Right lobe of liver (tissue), 6 donors: ENCODE measurements at regions of chr5 and their contacts with region 1.

Region 1: GRCh38 chr5:132419502-132420468 is 50.3 kb downstream of the SLC22A5 start:
- DNase-seq: peak; percentile 63 to 74 (median 74)
- ATAC-seq: peak; percentile 69 to 76 (median 72)
- H3K4me3 ChIP-seq: no peak overlapping the region
- H3K27ac ChIP-seq: peak overlapping the region; percentile 45 to 62 (median 58)
- H3K4me1 ChIP-seq: peaks cover 5 to 80% (median 39%) of the 10 kb centered on the region in 4 donors
- H3K27me3 ChIP-seq: no peaks in the 10 kb centered on the region
- CTCF ChIP-seq: peak; percentile 85 to 91 (median 86)
- POLR2A ChIP-seq: no peak

Region 2: DNA sequence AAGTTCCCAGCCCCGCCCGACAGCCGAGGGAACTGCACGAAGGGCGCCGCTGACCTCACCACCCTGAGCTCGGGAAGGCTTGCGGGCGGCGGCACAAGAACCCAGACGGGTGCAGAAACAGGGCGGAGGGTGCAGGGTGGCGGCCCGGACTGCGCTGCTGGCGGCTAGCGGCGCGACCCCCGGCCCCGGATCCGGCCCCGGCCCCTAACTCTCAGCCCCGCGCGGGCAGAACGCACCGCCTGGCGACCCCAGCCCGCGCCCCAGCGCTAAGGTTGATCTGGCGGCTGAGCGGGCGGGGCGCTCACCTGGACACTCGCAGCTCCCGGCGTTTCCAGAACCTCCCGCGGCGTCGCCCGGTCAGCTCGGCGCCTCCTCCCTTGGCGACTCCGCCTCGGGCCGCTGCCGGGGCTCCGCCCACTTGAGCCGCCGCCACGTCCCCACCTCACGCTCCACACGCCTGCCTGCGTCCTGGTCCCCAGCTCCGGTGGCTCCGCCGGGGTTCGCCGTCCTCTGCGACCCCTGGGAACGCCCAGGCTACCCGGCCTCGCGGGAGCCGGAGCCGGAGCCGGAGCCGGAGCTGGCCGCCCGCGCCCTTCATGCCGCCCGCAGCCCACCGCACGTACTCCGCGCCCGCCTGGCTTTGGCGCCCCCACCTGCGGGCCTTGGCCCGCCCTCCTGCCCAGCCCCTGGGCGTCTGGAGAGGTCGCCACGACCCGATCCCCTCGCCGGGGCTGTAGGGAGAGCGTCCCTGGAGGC is 192.1 kb before region 1 on chr5 and contains the start of gene P4HA2:
- intact Hi-C with region 1: no loop called
- DNase-seq: peak; percentile 91 to 94 (median 92)
- ATAC-seq: peak; percentile 94 to 98 (median 96)
- H3K4me3 ChIP-seq: peak within 1 kb of the TSS; percentile 52 to 65 (median 61)
- H3K27ac ChIP-seq: peak within 1 kb of the TSS; percentile 93 to 98 (median 95)
- H3K4me1 ChIP-seq: peaks cover 0 to 10% (median 0%) of the 10 kb centered on the region in 4 donors
- H3K27me3 ChIP-seq: no peaks in the 10 kb centered on the region
- CTCF ChIP-seq: peak in 1 of 4 donors; percentile 38
- POLR2A ChIP-seq: peak; percentile 81
- total RNA-seq, gene P4HA2: 11.5 to 23.2 (median 16.5) TPM

Region 3: DNA sequence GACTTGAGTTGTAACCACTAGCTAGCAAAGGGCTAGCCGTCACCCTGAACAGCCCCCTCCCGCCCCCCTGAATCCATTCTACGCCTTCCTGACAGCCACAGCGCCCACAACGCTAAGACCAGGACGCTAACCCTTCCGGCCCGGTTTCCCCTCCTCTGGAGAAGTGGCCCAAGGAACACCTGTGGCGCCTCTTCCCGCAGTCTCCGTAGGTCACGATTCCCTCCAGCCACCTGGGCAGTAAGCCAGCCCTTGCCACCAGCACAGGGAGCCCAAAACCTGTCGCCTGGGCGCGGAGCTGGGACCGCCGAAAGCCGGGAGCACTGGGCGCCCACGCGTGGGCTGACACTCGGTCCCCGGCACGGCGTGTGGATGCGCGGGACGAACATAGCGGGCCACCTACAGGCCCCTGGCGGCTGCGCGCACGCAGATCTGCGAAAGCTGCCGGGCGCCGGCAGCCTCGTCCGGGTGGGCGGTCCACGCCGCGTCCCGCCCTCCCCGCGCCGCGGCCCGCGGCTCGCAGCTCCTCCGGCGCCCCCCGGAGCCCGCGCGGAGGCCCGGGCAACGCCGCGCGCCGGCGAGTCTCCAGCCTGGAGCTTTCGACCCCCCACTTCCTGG is 70.2 kb after region 1 on chr5:
- intact Hi-C with region 1: loop called (anchors 10 kb)
- DNase-seq: peak; percentile 66 to 81 (median 75)
- ATAC-seq: peak; percentile 7 to 51 (median 36)
- H3K4me3 ChIP-seq: peak overlapping the region; percentile 93 to 95 (median 95)
- H3K27ac ChIP-seq: peak overlapping the region; percentile 88 to 99 (median 98)
- H3K4me1 ChIP-seq: peaks cover 0 to 39% (median 18%) of the 10 kb centered on the region in 4 donors
- H3K27me3 ChIP-seq: no peaks in the 10 kb centered on the region
- CTCF ChIP-seq: peak in 3 of 4 donors; percentile 5 to 35 (median 24)
- POLR2A ChIP-seq: no peak